Activated naive CD4-positive, alpha-beta T cell treated with anti-CD3 and anti-CD28 coated beads for 36 hours (primary cell): ENCODE measurements at regions of chr9 and their contacts with region 1.

Region 1: DNA sequence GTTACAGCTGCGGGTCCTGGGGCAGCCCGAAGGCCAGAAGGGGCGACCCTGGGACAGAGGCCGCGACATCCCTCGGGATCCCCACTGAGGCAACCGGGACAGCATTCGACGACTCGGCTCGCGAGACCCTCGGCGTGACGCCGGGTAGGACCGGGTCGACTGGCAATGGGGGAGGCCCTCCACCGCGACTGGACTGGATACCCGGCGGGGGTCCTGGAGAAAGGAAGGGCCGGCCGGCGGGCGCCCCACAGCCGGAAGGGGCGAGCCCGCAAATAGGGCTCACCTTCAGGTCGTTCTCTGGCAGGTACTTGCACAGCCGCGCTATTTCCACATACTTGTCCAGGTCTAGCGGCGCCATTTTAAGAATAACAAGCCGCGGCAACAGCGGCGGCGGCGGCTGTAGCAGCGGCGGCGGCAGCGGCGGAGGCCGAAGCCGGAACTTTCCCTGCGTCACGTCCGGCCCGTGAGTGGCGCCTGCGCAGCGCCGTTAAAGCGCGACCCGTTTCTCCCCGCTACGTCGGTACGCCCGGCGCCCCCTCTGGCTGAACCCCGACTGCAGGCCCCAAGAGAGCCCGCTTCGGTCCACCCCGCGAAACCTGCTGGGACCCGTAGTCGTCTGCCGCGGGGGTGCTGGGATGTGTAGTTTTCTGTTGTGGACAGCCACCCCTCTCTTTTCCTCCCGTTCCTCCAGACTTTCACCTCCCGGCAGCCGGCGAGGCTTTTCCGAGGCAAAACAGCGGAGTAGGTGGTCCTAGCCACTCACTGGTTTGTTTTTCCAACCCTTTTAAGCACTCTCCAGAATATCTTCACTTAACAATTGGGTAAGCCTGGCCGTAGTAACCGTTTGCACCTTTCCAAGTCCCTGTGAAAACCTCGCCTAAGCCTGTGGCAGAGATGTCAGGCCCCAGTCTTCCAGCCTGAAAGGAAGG is at the start of gene PPP6C:
- DNase-seq: peak; percentile 99
- H3K4me3 Mint-ChIP-seq: peak within 1 kb of the TSS; percentile 97
- H3K27ac Mint-ChIP-seq: peak within 1 kb of the TSS; percentile 97
- H3K4me1 Mint-ChIP-seq: peaks cover 64% of the 10 kb centered on the region
- H3K27me3 Mint-ChIP-seq: no peaks in the 10 kb centered on the region
- total RNA-seq, gene PPP6C: 43.6 to 46.3 TPM

Region 2: GRCh38 chr9:124869986-124870560 is 319.6 kb before region 1 on chr9:
- CTCF ChIA-PET with region 1: no interaction called
- intact Hi-C with region 1: loop called (anchors 1 kb)
- DNase-seq: peak; percentile 98
- H3K4me3 Mint-ChIP-seq: peak overlapping the region; percentile 92
- H3K27ac Mint-ChIP-seq: peak overlapping the region; percentile 99
- H3K4me1 Mint-ChIP-seq: peaks cover 52% of the 10 kb centered on the region
- H3K27me3 Mint-ChIP-seq: no peaks in the 10 kb centered on the region

Region 3: DNA sequence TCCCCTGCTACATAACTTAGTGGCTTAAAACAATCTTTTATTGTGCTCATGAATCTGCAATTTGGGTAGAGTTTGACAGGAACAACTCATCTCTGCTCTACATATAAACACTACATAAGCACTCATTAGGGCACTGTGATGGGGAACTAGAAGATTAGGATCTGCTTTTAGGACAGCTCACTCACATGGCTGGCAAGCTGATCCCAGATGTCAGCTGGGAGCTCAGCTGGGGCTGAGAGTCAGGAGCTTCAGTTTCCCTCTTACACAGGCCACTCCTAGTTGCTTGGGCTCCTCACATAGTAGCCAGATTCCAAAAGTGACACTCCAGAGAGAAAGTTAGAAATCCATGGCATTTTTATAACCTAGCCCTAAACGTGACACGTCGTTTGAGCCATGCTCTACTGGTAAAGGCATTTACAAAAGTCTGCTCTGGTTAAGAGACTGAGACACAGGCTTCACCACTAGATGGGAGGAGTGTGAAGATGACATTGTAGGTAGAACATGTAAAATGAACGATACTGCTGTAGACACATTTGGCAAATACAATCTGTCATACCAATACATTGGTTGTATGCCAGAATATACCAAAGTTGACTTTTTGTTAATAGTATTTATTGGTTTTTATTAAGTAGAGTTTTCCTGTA is 69.9 kb before region 1 on chr9:
- CTCF ChIA-PET with region 1: interaction called, 6 read pairs
- intact Hi-C with region 1: loop called (anchors 2 kb)
- DNase-seq: peak; percentile 41
- H3K4me3 Mint-ChIP-seq: no peak overlapping the region
- H3K27ac Mint-ChIP-seq: no peak overlapping the region
- H3K4me1 Mint-ChIP-seq: peaks cover 39% of the 10 kb centered on the region
- H3K27me3 Mint-ChIP-seq: no peaks in the 10 kb centered on the region

Region 4: GRCh38 chr9:125200210-125201047 is 10.8 kb after region 1 on chr9 and contains the start of gene RABEPK:
- CTCF ChIA-PET with region 1: interaction called, 6 read pairs
- intact Hi-C with region 1: loop called (anchors 1 kb)
- DNase-seq: peak; percentile 91
- H3K4me3 Mint-ChIP-seq: peak within 1 kb of the TSS; percentile 91
- H3K27ac Mint-ChIP-seq: peak within 1 kb of the TSS; percentile 81
- H3K4me1 Mint-ChIP-seq: peaks cover 39% of the 10 kb centered on the region
- H3K27me3 Mint-ChIP-seq: no peaks in the 10 kb centered on the region
- total RNA-seq, gene RABEPK: 18.4 to 19.8 TPM

Region 5: DNA sequence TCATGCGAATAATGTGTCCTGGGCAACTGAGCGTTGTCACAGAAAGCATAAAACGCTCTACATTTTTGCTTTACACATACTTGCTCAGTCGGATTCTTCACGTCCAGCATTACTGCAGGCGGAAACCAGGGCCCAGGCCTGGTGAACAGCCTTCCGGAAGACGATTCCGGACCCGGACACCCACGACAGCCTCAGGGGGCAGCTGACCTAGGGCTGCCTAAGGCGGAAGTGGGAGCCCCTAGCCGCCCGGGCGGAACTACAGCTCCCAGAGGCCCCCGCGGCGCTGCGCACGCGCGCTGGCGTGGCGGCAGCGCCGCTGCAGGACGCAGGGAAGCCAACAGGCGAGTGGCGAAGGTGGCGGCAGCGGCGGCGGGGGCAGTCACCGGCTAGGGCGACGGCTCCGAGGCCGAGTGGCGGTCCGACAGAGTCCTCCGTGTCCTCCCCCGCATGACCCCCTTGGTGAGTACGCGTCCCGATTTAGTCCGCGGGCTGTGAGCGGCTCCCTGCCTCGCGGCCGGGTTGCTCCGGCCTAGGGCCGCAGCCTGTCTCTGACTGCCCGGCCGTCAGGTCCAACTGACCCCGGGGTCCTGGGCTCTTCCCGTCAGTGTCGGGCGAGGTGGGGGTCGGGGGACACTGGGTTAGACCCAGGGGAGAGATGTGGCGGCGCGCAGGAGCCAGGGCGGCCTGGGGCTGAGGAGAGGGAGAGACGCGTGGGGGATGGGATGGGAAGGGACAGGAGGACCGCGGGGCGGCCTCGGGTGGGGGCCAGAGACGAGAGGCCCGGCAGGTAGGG is 72.1 kb after region 1 on chr9 and contains the start of gene GAPVD1:
- CTCF ChIA-PET with region 1: no interaction called
- intact Hi-C with region 1: loop called (anchors 2 kb)
- DNase-seq: peak; percentile 90
- H3K4me3 Mint-ChIP-seq: peak within 1 kb of the TSS; percentile 98
- H3K27ac Mint-ChIP-seq: peak within 1 kb of the TSS; percentile 86
- H3K4me1 Mint-ChIP-seq: peaks cover 31% of the 10 kb centered on the region
- H3K27me3 Mint-ChIP-seq: no peaks in the 10 kb centered on the region
- total RNA-seq, gene GAPVD1: 38.1 to 40.0 TPM